HAP-1 (cell line): ENCODE measurements at regions of chr11 and their contacts with region 1.

Region 1: DNA sequence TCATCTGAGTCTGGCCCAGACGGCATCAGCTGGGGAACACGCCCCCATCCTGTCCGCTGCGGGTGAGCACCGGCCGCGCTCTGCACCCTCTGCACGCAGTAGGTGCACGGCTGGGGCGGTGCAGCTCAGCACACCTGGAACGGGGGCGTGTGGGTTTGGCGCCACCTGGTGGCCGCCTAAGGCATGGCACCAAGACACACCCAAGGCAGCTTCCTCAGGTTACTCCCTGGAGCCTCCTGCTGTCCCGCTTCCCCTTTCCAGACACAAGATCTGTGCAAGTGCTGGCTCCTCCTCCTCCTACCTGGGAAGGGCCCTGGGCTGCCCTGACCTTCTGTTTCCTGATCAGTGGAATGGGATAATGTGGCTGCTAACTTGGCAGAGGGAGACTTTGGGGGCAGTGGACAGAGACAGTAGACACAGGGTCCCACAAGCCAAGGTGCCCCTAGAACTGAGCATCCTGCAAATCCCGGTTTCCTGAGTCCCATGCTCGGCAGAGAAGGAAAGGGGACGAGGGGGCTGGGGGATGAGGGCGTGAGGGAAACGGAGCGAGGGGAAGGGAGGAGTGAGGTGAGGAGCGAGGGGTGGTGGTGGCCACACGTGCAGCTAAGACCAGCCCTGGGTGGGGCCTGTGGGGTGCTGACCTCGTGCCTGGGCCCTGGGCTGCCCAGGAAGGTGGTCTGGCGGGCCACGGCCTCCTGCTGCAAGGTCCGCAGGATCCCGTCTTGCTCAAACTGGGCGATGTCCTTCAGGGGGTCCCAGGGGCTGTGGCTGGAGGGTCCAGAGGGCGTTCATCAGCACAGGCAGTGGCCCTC is 34.8 kb upstream of the CARS1 start:
- DNase-seq: peak; percentile 65 to 85
- H3K4me3 ChIP-seq: no peak overlapping the region
- H3K4me1 ChIP-seq: no peaks in the 10 kb centered on the region; the same call in 1 of the 2 replicates
- H3K27me3 ChIP-seq: no peaks in the 10 kb centered on the region

Region 2: DNA sequence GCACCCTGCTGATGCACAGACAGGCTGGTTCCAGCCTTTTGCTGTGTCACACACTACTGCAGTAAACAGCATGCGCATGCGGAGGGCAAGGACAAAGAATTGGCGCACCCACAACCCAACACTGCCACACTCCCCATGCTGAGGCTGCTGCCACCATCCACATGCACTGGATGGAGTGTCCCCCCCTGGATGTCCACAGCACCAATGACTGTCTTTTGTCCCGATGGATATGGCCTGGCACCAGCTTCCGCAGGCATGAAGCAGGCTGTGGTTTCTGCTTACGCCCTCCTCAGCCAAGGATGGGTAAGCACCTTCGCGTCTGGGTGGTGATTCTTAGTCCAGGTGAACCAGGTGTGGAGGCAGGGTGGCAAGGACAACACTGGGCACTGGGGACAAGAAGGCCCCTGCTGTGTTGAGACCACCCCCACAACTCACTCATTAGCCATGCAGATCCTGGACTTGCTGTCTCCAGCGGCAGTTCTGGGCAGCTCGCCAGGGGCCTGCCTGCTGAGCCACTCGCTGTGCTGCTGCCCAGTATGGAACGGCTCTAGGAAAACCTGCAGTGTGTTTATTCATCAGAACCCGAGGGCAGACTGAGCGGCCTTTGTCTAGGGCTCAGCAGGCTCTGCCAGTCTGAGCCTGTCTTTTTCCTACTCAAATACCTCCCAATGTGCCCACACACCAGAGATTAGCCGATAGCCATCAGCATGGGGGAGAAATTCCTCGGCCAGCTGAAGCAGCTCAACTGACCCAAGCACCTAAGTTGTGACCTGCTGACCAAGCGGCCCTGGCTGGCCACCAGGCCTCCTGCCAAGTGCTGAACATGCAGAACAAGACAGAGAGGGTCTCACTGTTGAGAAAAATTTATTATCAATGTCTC is 91.7 kb before region 1 on chr11:
- in situ Hi-C with region 1: no loop called
- DNase-seq: no peak
- H3K4me3 ChIP-seq: no peak overlapping the region
- H3K4me1 ChIP-seq: no peaks in the 10 kb centered on the region
- H3K27me3 ChIP-seq: no peaks in the 10 kb centered on the region

Region 3: GRCh38 chr11:3043315-3043871 is 48.6 kb before region 1 on chr11:
- in situ Hi-C with region 1: loop called (anchors 5 kb)
- DNase-seq: no peak
- H3K4me3 ChIP-seq: no peak overlapping the region
- H3K4me1 ChIP-seq: no peaks in the 10 kb centered on the region
- H3K27me3 ChIP-seq: no peaks in the 10 kb centered on the region

Region 4: DNA sequence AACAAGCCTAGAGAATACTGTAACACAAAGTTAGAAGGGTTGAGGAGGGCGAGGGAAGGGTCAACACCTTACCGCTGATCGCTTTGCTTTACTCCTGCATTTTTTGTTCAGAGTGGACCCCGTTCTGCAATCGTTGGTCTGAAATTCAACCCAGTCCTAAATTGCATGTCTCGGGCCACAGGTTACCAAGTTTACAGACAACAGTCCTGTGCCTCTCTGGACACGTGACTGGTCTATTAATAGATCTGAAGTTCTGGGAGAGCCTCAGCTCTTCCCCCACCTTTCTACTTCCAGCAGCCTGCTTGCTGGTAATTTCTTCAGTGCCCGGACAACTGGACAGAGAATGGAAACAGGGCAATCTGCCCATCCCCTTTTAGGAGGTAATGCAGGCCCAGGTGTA is 837.7 kb after region 1 on chr11:
- in situ Hi-C with region 1: no loop called
- DNase-seq: no peak
- H3K4me3 ChIP-seq: no peak overlapping the region
- H3K4me1 ChIP-seq: no peaks in the 10 kb centered on the region
- H3K27me3 ChIP-seq: no peaks in the 10 kb centered on the region